Psoas muscle (tissue), 8 donors: ENCODE measurements at regions of chr13 and their contacts with region 1.

Region 1: GRCh38 chr13:51286135-51287002 is 53.1 kb upstream of the SERPINE3 start:
- DNase-seq: peak; percentile 73 to 86
- ATAC-seq: peak; percentile 80 to 93 (median 82)
- H3K4me3 ChIP-seq: no peak overlapping the region
- H3K27ac ChIP-seq: no peak overlapping the region
- H3K4me1 ChIP-seq: no peaks in the 10 kb centered on the region
- H3K27me3 ChIP-seq: no peaks in the 10 kb centered on the region
- CTCF ChIP-seq: peak; percentile 93

Region 2: GRCh38 chr13:51101636-51102235 is 184.6 kb before region 1 on chr13:
- intact Hi-C with region 1: no loop called
- DNase-seq: no peak
- ATAC-seq: no peak
- H3K4me3 ChIP-seq: no peak overlapping the region
- H3K27ac ChIP-seq: no peak overlapping the region
- H3K4me1 ChIP-seq: no peaks in the 10 kb centered on the region
- H3K27me3 ChIP-seq: peaks cover 0 to 5% (median 0%) of the 10 kb centered on the region in 3 donors
- CTCF ChIP-seq: no peak

Region 3: DNA sequence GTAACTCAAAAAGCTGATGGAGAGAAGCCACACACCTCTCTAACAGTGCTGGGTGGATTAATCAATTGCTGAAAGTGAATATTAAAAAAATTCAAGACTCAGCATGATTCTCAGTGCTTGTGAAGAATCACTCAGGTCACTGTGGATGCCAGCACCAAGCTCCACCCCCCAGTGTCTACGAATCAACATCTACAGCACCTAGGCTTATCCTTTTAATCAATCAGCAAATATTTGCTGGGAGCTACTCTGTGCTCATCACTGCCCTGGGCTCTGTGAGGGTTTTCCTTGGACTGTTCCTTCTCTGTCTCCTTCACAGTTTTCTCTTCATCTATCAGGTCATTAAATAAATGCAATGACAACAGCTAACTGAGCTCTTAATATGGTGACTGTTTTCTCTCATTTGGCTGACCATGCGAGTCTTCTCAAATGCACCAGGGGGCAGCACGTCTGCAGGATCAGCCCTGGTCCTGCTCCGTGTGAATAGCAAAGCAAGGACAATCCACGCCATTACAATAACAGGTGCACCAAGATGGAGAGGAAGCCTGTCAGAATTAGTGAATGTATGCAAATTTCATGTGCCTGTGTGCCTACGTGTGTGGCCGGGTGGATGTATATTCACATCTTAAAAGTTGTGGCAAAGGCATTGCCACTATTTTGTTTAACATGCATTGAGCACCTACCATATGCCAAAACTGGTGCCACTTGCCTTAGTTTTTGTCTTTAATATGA is 160.7 kb before region 1 on chr13:
- intact Hi-C with region 1: loop called (anchors 2 kb)
- DNase-seq: peak; percentile 29 to 61
- ATAC-seq: peak in 3 of 4 donors; percentile 68 to 78 (median 74)
- H3K4me3 ChIP-seq: no peak overlapping the region
- H3K27ac ChIP-seq: no peak overlapping the region
- H3K4me1 ChIP-seq: no peaks in the 10 kb centered on the region
- H3K27me3 ChIP-seq: no peaks in the 10 kb centered on the region
- CTCF ChIP-seq: peak; percentile 68

Region 4: GRCh38 chr13:51148952-51149573 is 137.3 kb before region 1 on chr13:
- intact Hi-C with region 1: loop called (anchors 2 to 5 kb)
- DNase-seq: no peak
- ATAC-seq: no peak
- H3K4me3 ChIP-seq: no peak overlapping the region
- H3K27ac ChIP-seq: no peak overlapping the region
- H3K4me1 ChIP-seq: no peaks in the 10 kb centered on the region
- H3K27me3 ChIP-seq: no peaks in the 10 kb centered on the region
- CTCF ChIP-seq: peak; percentile 48

Region 5: DNA sequence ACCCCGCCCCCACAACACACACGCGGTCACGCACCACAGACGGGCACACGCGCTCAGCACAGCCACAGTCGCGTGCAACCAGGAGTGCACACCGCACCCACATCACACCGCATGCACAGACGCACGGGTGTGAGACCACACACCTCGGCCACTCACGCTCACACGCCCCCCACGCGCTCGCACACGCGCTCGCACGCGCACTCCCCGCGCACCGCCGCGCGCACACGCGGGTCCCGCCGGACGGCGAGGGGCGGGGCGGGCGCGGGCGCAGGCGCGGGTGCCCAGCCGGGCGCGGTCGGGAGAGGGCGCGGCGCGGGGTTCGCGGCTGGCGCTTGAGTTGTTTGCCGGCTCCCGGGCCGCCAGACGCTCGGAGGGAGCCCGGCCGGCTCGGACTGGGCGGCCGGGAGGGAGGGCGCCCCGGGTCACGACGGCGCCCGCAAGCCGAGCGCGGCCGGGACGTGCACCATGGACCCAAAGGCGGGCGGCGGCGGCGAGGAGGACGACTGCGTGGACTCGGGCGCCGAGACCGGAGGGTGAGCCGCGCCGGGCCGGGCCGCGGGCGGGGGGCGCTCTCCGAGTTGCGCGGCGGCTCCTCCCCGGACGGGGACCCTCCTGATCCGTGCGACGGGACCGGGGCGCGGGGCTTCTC is 64.2 kb before region 1 on chr13 and contains the start of gene FAM124A:
- intact Hi-C with region 1: loop called (anchors 2 to 5 kb)
- DNase-seq: peak; percentile 48 to 59
- ATAC-seq: peak; percentile 73 to 91 (median 84)
- H3K4me3 ChIP-seq: peak within 1 kb of the TSS; percentile 86
- H3K27ac ChIP-seq: peak within 1 kb of the TSS; percentile 36
- H3K4me1 ChIP-seq: no peaks in the 10 kb centered on the region
- H3K27me3 ChIP-seq: peaks cover 0 to 1% (median 0%) of the 10 kb centered on the region in 3 donors
- CTCF ChIP-seq: peak; percentile 55
- total RNA-seq, gene FAM124A: 0.63 to 1.5 (median 0.99) TPM

Region 6: GRCh38 chr13:51235756-51236490 is 50.4 kb before region 1 on chr13:
- intact Hi-C with region 1: no loop called
- DNase-seq: no peak
- ATAC-seq: no peak
- H3K4me3 ChIP-seq: no peak overlapping the region
- H3K27ac ChIP-seq: no peak overlapping the region
- H3K4me1 ChIP-seq: no peaks in the 10 kb centered on the region
- H3K27me3 ChIP-seq: no peaks in the 10 kb centered on the region
- CTCF ChIP-seq: no peak